Astrocyte of the cerebellum (primary cell): ENCODE measurements at regions of chr13 and their contacts with region 1.

Region 1: GRCh38 chr13:27245610-27246009 is 5.7 kb upstream of the RPL21 start:
- DNase-seq: no peak
- H3K4me3 ChIP-seq: no peak overlapping the region
- CTCF ChIP-seq: no peak

Region 2: GRCh38 chr13:27161980-27162379 is 83.6 kb before region 1 on chr13:
- in situ Hi-C with region 1: loop called (anchors 5 kb)
- DNase-seq: no peak
- H3K4me3 ChIP-seq: no peak overlapping the region
- CTCF ChIP-seq: no peak

Region 3: DNA sequence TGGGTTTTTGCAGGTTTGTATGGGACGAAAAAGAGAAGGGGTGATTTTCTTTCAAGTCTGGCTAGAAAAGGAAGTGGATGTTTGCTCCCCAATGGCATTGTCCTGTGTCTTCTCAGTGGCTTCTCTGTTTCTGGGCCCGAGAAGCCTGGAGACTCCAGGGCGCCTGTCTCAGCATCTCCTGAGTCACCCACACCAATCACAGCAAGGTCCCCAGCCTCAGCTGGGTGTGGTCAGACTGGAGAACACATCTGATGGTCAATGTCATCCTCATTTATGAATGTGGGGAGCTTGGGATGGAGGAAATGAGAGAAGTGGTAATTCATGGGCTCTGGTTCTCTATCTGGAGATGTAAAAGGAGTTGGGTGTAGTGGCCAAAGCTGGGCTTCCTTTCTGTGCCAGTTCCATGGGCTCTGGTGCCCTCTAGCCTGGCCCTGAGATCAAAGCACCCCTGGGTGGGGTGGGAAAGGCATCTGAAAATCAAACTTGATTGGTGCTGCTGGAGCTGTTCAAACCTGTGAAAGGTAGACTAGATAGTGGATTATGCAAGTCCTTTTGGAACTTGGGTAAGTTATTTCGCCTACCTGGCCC is 38.4 kb after region 1 on chr13:
- in situ Hi-C with region 1: no loop called
- DNase-seq: no peak
- H3K4me3 ChIP-seq: no peak overlapping the region
- CTCF ChIP-seq: peak; percentile 27